GM10248 (cell line): ENCODE measurements at regions of chr5 and their contacts with region 1.

Region 1: GRCh38 chr5:151164686-151165392 is 7.3 kb upstream of the ANXA6 start:
- DNase-seq: peak; percentile 76
- CTCF ChIP-seq: peak; percentile 93

Region 2: GRCh38 chr5:150778517-150779396 is 386.1 kb before region 1 on chr5 and contains the start of gene SMIM3:
- CTCF ChIA-PET with region 1: no interaction called
- POLR2A ChIA-PET with region 1: no interaction called
- DNase-seq: peak; percentile 69
- CTCF ChIP-seq: peak; percentile 85

Region 3: DNA sequence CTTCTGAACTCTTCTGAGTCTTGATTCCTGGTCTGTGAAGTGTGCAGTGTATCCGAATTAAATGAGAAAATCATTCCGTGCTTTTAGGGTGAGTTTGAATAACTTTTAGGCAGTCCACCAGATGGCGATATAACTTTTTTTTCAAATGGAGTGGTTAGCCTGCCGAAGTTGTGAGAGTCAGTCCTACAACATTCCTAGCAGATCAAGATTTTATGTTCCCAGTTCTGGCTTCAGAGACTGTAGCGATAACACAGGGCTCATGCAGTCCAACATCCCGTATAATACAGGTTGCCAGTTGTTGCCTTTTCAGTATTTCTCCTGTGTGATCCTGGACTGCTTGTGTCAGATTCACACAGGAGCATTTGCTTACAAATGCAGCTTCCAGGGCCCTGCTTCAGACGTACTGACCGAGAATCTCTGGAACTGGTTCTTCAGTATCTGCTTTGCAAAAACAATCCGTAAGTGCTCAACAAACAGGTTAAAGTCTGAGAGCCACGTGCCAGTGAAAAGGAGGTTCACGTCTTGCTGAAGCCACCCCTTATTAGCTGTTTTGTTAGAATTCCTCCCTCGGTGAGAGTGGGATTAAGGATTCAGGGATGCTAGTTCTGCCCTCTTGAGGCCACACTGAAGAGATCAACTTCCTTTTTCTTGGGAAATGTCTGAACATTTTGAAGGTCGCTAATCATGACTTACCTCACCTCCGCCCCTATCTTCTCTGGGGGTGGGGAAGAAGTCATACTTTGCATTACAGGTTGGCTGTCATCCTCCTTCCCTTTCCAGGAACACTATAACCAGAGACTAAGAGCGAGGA is 363.5 kb before region 1 on chr5:
- CTCF ChIA-PET with region 1: interaction called, 37 read pairs
- POLR2A ChIA-PET with region 1: no interaction called
- DNase-seq: peak; percentile 41
- CTCF ChIP-seq: peak; percentile 53

Region 4: GRCh38 chr5:151063142-151063949 is 101.5 kb before region 1 on chr5:
- CTCF ChIA-PET with region 1: interaction called, 13 read pairs
- POLR2A ChIA-PET with region 1: no interaction called
- DNase-seq: no peak
- CTCF ChIP-seq: no peak

Region 5: DNA sequence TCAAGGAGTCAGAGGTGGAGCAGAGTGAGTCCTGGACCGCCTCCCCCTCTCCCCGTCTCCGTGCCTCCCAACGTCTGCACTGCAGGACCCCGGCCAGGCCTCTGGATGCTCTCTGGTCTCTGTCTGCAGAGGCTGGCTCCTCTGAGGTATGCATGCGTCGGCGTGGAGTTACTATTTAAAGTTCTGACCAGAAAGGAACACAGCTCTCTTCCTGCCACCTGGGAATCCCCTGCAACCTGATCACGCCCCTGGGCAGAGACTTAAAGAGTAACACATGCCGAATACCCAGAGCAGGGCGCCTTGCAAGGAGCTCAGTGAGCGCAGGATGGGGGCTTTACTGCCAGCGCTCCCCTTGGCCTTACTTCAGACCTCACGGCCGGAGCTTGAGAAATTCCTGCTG is 23.3 kb before region 1 on chr5:
- CTCF ChIA-PET with region 1: interaction called, 55 read pairs
- POLR2A ChIA-PET with region 1: no interaction called
- DNase-seq: peak; percentile 84
- CTCF ChIP-seq: no peak

Region 6: DNA sequence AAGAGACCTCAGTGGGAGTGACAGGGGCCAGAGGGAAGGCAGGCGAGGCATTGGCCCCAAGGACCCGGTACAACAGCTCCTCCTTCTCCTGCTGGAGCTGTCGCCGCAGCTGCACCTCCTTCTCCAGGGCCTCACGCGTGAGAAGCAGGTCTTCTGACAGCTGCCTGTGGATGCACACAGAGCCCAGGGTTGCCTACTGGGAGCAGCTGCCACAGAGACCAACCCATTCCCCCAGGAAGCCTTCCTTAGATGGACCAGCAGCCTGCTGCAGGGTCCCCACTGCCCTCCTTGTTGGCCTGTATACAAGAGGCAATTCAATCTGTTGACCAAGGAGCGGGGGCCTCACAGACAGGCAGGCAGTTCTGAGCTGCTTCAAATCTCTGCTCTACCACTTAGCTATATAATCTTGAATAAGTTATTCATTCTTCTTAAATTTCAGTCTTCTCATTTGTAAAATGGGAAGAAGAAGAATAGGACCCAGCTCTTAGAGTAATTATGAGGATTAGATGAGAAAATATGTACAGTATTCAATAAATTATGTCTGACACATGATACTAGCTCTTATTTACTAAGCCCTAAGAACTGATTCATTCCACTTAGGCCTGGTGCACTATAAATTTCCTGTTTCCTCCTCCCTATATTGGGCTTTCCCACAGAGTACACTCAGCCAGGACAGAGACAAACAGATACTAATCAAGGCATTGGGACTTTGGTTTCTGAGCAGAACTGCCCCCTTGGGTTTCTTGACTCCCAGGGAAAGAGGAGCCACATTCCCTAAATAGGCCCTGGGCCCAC is 18.8 kb after region 1 on chr5:
- CTCF ChIA-PET with region 1: interaction called, 25 read pairs
- POLR2A ChIA-PET with region 1: no interaction called
- DNase-seq: no peak
- CTCF ChIP-seq: no peak

Region 7: DNA sequence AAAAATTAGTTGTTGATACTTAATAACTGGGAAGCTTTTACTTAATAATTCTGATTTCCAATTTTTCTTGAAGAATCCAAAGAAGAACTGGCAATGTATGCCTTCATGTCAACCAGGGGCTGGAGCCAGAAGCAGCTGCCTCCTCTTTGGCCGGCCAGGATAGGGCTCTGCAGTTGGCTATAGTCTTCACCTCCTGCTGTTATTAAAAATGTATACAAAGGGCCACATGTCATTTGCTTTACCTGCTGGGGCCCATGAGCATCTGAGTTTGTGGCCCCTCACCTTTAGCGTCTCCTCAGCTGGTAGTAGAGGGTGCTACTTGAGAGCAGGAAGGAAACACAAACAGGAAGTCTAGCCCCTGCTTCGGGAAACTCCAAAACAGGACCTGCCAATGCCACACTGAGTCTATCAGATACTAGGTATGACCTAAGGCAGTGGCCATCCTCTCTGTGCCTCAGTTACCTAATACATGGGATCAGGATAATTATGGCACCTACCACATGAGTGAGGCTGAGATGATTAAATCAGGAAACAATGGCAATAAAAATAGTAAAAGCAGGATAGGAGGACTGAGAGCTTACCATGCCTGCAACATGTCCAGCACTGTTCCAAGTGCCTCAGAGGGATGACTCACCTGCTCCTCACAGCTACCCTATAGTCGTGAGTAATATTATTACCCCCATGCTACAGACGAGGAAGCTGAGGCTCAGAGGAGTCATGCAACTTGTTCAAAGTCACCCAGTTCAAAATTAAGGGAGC is 37.7 kb after region 1 on chr5:
- CTCF ChIA-PET with region 1: interaction called, 10 read pairs
- POLR2A ChIA-PET with region 1: no interaction called
- DNase-seq: no peak
- CTCF ChIP-seq: no peak

Region 8: GRCh38 chr5:151236888-151237287 is 72.0 kb after region 1 on chr5:
- CTCF ChIA-PET with region 1: no interaction called
- POLR2A ChIA-PET with region 1: no interaction called
- DNase-seq: no peak
- CTCF ChIP-seq: no peak

Region 9: DNA sequence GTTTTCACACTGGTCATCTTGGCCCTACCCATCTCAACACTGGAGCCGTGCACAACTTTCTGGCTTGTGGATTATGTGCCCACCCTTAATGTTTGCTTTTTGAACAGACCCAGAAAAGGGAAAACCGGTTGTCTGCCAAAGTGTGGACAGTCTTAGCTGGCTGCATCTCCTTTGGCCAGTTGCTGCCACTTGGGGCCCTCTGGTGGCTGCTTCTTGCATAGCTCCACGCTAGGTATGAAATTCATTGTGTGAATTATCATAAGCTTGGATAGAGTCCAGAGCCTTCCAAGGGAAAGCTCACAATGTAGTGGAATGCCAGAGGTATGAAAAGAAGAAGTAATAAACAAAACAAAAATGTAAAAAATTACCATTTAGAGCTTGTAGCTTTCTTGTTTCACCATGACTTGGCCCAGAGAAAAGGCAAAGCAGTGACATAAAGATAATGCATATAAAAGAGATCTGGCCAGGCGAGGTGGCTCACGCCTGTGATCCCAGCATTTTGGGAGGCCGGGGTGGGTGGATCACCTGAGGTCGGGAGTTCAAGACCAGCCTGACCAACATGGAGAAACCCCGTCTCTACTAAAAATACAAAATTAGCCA is 151.3 kb after region 1 on chr5:
- CTCF ChIA-PET with region 1: interaction called, 13 read pairs
- POLR2A ChIA-PET with region 1: no interaction called
- DNase-seq: peak; percentile 80
- CTCF ChIP-seq: peak; percentile 95